ENCODE measurements at regions of chr11 and their contacts with region 1.

Region 1: GRCh38 chr11:20087118-20087521 is 73.2 kb downstream of the DBX1 start:
- DNase-seq: no peak
- H3K4me3 ChIP-seq: no peak overlapping the region
- H3K27ac ChIP-seq: no peak overlapping the region
- H3K4me1 ChIP-seq: no peaks in the 10 kb centered on the region
- H3K27me3 ChIP-seq: no peaks in the 10 kb centered on the region
- CTCF ChIP-seq: no peak
- POLR2A ChIP-seq: no peak

Region 2: GRCh38 chr11:20048211-20048610 is 38.9 kb before region 1 on chr11:
- intact Hi-C with region 1: loop called (anchors 2 kb)
- DNase-seq: no peak
- H3K4me3 ChIP-seq: no peak overlapping the region
- H3K27ac ChIP-seq: peak overlapping the region in 1 of 2 donors; percentile 57
- H3K4me1 ChIP-seq: no peaks in the 10 kb centered on the region
- H3K27me3 ChIP-seq: no peaks in the 10 kb centered on the region
- CTCF ChIP-seq: no peak
- POLR2A ChIP-seq: no peak

Region 3: DNA sequence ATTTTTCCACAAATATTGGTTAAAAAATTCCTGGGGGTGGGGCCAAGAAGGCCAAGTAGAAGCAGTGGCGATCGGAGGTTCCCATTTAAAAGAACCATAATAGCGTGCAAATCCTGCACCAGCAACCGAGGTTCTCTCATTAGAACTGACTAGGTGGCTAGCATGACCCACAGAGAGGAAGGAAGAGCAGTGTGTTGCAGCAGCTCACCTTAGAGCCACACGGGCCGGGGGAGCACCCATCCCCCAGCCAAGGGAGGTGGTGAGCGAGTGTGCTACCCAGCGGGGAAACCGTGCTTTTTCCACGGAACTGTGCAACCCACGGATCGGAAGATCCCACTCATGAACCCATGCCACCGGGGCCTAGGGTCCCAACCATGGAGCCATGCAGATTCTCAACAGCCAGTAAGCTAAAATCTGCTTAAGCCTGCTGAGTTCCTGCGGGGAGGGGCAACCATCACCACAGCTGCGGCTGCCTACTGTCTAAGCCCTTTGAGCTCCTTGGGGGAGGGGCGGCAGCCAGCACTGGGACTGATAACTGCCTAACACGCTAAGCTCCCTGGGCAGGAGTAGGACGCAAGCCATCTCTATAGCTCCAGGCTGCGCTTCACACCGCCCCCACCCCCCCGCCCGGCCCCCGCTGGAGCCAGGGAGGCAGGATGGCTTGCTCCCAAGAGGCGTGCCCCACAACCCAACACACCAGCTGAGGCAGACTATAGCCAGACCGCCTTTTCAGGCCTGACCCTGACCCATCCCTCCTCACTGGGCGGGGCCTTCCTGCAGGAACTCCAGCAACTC is 255.4 kb after region 1 on chr11:
- intact Hi-C with region 1: no loop called
- DNase-seq: no peak
- H3K4me3 ChIP-seq: no peak overlapping the region
- H3K27ac ChIP-seq: no peak overlapping the region
- H3K4me1 ChIP-seq: no peaks in the 10 kb centered on the region
- H3K27me3 ChIP-seq: peaks cover 0 to 19% of the 10 kb centered on the region in 2 donors
- CTCF ChIP-seq: no peak
- POLR2A ChIP-seq: no peak

Region 4: DNA sequence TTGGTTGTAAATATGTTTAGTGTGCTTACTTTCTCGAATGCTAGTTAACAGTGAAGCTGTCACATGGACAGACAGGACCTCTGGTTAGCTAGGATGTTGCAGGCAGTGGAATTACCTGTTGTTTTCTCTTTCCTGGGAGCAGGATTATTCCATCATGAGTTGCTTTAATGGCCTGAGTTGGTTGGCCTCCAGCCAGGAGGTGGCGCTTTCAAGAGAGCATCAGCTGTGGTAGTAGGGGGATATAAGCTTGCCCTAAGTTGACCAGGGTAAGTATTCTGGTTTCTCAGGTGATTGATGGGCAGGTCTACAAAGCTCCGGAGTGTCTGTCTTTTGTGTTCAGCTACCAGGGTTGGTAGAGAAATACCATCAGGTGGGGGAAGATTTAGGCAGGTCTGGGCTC is 625.8 kb after region 1 on chr11:
- intact Hi-C with region 1: no loop called
- DNase-seq: no peak
- H3K4me3 ChIP-seq: no peak overlapping the region
- H3K27ac ChIP-seq: no peak overlapping the region
- H3K4me1 ChIP-seq: no peaks in the 10 kb centered on the region
- H3K27me3 ChIP-seq: no peaks in the 10 kb centered on the region
- CTCF ChIP-seq: no peak
- POLR2A ChIP-seq: no peak

Region 5: DNA sequence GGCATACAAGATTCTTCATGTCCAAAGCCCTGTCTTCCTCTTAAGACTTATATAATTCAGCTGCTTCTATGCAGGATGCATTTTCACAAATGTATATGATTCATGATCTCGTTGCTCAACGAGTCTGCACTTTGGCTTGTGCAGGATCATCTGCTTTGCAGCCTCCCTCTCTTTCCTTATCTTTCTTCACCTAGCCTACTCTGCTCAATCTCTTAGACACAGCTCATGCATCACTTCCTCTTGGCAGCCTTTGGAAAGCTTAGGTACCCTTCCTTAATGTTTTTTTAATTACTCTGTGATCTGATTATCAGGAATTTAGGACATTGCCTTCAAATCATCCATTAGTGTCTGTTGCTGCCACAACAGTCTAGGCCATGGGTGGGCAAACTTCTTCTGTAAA is 1256.1 kb after region 1 on chr11:
- intact Hi-C with region 1: no loop called
- DNase-seq: no peak
- H3K4me3 ChIP-seq: no peak overlapping the region
- H3K27ac ChIP-seq: no peak overlapping the region
- H3K4me1 ChIP-seq: no peaks in the 10 kb centered on the region
- H3K27me3 ChIP-seq: no peaks in the 10 kb centered on the region
- CTCF ChIP-seq: no peak
- POLR2A ChIP-seq: no peak